PC-9 (cell line): ENCODE measurements at regions of chr2 and their contacts with region 1.

Region 1: DNA sequence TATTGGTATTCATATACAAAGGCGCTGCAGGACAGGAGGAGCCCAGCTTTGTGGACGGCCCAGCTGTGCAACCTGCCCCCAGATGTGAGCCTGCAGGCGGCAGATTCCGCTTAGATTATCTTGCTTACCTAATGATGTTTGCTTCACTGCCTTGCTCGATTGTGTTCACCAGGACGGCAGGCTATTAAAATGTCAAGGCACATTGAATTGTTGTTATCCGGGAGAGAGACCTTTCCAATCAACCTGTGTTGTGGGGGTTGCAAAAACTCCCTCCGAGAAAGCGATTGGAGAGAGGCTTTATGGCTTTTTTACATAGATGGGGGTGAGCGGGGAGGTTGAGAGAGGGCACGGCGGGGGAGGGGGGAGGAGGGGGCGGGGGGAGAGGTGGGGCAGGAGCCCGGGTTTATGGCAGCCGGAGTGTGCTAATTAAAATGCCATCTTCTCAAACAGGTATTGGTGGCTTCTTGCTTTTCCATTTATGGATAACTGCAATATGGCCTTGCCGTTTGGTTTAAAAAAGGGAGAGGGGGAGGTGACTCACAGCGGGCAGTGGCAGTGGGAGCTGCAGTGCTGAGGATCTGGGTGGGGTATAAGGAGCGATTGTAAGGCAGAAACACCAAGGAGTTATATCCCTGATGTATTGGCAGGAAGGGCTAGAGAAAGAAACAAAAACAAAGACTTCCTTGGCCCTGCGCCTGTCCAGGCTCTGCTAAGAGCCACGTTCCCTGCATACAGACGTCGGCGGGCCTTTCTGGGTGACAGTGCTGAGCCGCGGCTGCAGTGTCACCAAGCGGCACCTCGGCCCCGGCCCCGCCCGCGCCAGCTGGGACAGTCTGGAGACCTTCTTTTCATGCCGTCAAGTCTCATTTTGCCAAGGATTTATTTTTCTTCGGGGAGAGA is 97.2 kb downstream of the INSIG2 start:
- DNase-seq: peak; percentile 57 to 67
- H3K4me3 ChIP-seq: peak overlapping the region; percentile 75
- H3K27ac ChIP-seq: peak overlapping the region; percentile 92
- H3K4me1 ChIP-seq: peaks cover 23% of the 10 kb centered on the region
- H3K27me3 ChIP-seq: no peaks in the 10 kb centered on the region
- CTCF ChIP-seq: no peak; the same call in 1 of the 2 replicates

Region 2: GRCh38 chr2:118061135-118061955 is 124.1 kb before region 1 on chr2:
- CTCF ChIA-PET with region 1: no interaction called
- POLR2A ChIA-PET with region 1: no interaction called
- intact Hi-C with region 1: no loop called
- DNase-seq: peak in 1 of 2 experiments; percentile 70
- H3K4me3 ChIP-seq: no peak overlapping the region
- H3K27ac ChIP-seq: no peak overlapping the region
- H3K4me1 ChIP-seq: peaks cover 11% of the 10 kb centered on the region
- H3K27me3 ChIP-seq: no peaks in the 10 kb centered on the region
- CTCF ChIP-seq: peak; percentile 76

Region 3: DNA sequence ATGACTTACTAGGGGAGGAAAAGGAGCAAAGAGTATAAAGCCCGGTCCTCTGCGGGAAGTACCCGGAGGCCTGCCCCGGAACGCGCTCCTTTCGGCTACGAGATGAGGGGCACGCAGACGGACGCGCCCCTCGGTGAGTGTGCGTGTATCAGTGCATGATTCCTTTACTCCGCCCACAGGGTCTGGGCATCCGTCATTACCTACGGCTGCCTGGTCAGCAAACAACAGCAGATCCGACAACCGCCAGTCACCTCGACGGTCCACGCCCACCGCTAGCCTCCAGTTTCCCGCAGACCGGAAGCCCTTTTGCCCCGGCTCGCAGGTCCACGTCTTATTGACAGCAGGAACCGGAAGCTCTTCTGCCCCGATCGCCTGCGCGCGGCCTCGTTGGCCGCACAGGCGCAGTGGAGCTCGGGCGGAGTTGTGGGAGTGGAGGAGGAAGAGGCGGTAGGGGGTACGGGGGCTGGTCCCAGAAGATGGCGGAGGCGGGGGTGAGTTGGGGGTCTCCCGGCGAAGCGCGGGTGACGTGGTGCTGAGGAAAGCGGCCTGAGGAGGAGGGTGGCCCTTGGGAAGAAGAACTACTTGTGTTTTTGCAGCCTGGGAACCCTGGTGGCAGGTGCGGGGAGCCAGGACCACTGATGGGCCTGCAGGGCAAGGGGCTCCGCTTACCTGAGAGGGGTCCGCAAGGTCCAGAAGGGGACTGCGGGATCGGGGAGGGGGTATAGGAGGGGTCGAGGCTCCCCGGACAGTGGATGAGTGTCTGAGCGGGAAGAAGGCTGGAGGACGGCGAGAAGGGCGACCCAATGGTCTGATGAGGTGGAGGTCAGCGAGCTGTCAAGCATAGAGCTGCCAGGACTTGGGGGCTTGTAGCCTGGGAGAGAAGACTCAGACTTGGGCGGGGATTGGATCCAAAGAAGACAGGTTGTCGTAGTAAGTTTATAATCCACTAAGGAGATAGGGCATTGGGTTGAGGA is 97.1 kb before region 1 on chr2 and contains the start of gene INSIG2:
- CTCF ChIA-PET with region 1: no interaction called
- POLR2A ChIA-PET with region 1: interaction called, 3 read pairs
- intact Hi-C with region 1: loop called (anchors 2 kb)
- DNase-seq: peak; percentile 99 to 100
- H3K4me3 ChIP-seq: peak within 1 kb of the TSS; percentile 79
- H3K27ac ChIP-seq: peak within 1 kb of the TSS; percentile 94
- H3K4me1 ChIP-seq: peaks cover 69% of the 10 kb centered on the region
- H3K27me3 ChIP-seq: no peaks in the 10 kb centered on the region
- CTCF ChIP-seq: peak; percentile 13; the same call in 1 of the 2 replicates
- total RNA-seq, gene INSIG2: 33.6 and 54.8 TPM in 2 replicates

Region 4: DNA sequence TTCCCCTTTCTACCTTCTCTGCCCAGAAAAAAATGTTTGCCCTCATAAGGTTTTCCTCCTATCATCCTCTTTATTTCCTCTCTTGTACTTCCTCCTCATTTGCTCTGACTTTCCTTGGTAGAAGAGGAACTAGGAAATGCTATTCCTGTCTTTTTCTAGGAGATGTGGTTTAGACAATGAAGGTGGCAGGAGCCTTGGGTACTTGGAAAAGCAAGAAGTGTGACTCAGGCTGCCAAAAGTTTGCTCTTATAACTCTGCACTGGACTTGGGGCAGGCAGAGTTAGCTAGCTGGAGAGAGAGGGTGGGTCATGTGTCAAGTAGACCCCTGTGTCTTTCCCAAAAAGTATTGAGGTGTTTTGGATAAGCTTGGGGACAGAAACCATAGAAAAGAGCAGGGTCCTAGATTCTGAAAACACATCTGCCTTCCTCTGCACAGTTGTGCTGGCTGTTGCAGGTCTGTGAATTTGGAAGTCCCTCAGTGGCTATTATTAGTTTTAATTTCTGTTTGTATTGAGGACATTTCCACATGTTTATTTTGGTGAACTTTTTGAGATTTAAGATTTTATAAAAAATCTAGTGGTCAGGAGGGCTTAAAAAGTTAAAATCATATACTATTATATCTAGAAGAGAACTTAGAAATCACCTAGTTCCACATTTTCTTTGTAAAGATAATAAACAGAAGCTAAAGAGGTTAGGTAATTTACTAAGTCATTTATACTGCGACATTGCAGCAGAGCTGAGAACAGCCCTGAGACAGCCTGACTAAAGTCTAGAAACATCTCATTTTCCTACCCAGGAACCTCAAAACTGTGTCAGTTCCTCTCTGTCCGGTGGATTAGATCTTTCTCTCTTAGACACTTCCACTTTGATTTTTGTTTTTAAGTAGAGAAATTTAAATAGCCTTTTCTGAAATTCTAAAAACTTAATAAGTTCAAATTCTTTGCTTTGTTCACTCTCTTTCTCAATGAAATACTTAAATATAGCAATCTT is 81.2 kb before region 1 on chr2:
- CTCF ChIA-PET with region 1: interaction called, 11 read pairs
- POLR2A ChIA-PET with region 1: interaction called, 4 read pairs
- intact Hi-C with region 1: no loop called
- DNase-seq: peak in 1 of 2 experiments; percentile 24
- H3K4me3 ChIP-seq: no peak overlapping the region
- H3K27ac ChIP-seq: no peak overlapping the region
- H3K4me1 ChIP-seq: no peaks in the 10 kb centered on the region
- H3K27me3 ChIP-seq: no peaks in the 10 kb centered on the region
- CTCF ChIP-seq: no peak